ENCODE measurements at regions of chr1 and their contacts with region 1.

Region 1: DNA sequence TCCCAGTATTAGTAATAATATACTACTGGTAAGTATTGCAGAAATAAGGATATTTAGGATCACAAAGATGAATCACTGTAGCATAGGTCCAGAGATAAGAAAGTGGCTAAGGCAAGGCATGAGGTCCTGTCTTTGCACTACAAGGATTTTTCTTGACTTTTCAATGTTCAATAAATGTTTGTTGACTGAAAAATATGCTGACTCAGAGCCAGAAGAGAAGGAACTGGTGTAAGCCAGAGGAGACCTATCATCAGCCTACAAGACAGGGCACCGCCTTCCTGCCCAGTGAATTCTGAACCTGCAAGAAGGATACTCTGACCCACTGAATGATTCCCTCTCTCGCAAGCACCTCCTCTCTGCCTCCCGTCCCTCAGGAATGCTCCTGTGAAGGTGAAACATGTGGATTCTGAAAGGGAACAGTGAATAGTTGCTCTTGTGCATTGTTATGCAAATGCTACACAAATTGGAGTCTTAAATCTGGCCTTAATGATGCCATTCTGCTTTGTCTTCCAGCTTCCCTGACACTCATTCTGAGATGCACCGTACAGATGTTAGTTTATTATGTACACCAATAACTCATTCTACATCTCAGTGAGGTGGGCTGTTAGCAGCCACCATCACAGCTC is 540.0 kb downstream of the OMA1 start:
- DNase-seq: no peak
- ATAC-seq: no peak
- H3K4me3 ChIP-seq: no peak overlapping the region
- H3K27ac ChIP-seq: no peak overlapping the region
- H3K4me1 ChIP-seq: no peaks in the 10 kb centered on the region
- H3K27me3 ChIP-seq: peaks cover 0 to 3% (median 0%) of the 10 kb centered on the region in 9 donors
- CTCF ChIP-seq: no peak
- POLR2A ChIP-seq: no peak

Region 2: DNA sequence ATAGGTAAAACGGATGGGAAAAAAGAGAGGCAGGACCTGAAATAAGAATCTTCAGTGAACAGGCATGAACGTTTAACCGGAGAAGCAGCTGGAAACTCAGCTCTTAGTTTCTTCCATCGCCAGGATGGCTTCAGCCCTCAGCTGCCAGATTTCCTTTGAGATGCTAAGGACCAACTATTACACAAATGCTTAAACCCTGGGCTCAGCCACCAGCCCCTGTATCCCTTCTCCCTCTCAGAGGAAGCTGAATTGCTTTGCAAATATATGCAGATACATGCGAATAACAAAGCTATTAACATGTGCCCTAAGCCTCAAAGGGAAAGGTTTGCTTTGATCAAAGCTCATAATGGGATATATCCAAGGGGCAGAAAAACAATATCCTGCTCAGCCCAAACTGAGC is 24.9 kb after region 1 on chr1:
- intact Hi-C with region 1: loop called in 1 of 10 experiments (anchors 2 kb)
- DNase-seq: no peak
- ATAC-seq: no peak
- H3K4me3 ChIP-seq: no peak overlapping the region
- H3K27ac ChIP-seq: no peak overlapping the region
- H3K4me1 ChIP-seq: no peaks in the 10 kb centered on the region
- H3K27me3 ChIP-seq: peaks cover 0 to 9% (median 0%) of the 10 kb centered on the region in 9 donors
- CTCF ChIP-seq: no peak
- POLR2A ChIP-seq: no peak

Region 3: DNA sequence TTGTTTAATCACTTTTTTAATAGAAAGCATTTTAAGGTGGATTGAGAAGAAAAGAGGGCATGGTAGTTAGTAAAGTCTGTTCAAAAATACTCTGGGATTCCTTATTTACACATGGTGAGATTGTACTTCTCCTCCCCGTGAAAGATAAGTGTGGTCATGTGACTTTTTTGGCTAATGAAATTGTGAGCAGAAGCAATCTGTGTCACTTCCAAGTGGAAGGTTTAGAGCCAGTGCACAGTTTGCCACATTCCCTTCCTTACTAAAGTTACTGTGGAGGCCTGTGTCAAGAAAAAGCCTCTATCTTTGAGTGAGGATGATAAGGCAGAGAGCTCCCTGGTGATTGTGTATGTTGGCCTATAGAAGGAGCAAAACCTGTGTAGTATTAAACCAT is 68.6 kb after region 1 on chr1:
- intact Hi-C with region 1: no loop called
- DNase-seq: no peak
- ATAC-seq: peak in 2 of 4 donors; percentile 30 to 31
- H3K4me3 ChIP-seq: no peak overlapping the region
- H3K27ac ChIP-seq: no peak overlapping the region
- H3K4me1 ChIP-seq: peaks cover 0 to 15% (median 3%) of the 10 kb centered on the region in 12 donors
- H3K27me3 ChIP-seq: no peaks in the 10 kb centered on the region
- CTCF ChIP-seq: no peak
- POLR2A ChIP-seq: no peak

Measured in heart left ventricle (tissue), 16 donors.